GM10248 (cell line): ENCODE measurements at regions of chr7 and their contacts with region 1.

Region 1: DNA sequence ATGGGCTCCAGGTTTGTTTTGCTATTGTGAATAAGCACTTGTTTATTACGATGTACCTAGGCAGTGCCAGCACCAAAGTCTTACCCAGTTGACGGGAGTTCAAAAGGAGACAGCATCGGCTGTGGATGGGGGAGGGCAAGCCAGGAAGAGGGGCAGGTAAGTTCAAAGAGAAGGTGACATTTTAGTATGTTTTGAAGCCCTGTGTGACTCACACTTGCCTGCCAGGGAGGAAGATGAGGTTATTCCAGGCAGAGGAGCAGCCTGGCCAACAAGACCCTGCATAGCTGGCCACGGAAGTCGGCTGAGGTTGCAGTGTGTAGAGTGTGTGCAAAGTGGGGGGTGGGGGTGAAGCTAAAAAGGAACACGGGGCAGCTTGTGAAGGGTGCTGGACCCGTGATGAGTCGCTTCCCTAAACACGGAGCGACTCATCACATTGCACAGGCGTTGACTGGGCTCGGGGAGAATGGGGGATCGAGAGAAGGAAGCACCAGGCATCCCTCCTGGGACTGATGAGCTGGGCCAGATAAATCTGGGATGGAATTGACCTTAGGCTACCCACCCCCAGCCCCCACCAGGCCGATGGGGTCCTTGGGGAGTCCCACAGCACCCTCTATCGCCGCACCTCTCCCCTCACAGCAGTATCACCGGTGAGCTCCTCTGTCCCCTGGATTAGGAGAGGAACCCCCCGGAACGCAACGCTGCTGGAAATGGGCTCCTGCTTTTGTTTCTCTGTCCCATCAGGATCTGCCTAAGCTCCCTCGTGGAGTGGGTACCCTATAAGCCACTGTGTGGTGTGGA is 97.9 kb upstream of the IKZF1 start:
- DNase-seq: no peak
- CTCF ChIP-seq: no peak

Region 2: GRCh38 chr7:50190776-50191175 is 15.9 kb before region 1 on chr7:
- CTCF ChIA-PET with region 1: interaction called, 40 read pairs
- POLR2A ChIA-PET with region 1: no interaction called
- DNase-seq: no peak
- CTCF ChIP-seq: no peak

Region 3: GRCh38 chr7:50266635-50267386 is 60.2 kb after region 1 on chr7:
- CTCF ChIA-PET with region 1: interaction called, 12 read pairs
- POLR2A ChIA-PET with region 1: no interaction called
- DNase-seq: peak; percentile 59
- CTCF ChIP-seq: no peak

Region 4: DNA sequence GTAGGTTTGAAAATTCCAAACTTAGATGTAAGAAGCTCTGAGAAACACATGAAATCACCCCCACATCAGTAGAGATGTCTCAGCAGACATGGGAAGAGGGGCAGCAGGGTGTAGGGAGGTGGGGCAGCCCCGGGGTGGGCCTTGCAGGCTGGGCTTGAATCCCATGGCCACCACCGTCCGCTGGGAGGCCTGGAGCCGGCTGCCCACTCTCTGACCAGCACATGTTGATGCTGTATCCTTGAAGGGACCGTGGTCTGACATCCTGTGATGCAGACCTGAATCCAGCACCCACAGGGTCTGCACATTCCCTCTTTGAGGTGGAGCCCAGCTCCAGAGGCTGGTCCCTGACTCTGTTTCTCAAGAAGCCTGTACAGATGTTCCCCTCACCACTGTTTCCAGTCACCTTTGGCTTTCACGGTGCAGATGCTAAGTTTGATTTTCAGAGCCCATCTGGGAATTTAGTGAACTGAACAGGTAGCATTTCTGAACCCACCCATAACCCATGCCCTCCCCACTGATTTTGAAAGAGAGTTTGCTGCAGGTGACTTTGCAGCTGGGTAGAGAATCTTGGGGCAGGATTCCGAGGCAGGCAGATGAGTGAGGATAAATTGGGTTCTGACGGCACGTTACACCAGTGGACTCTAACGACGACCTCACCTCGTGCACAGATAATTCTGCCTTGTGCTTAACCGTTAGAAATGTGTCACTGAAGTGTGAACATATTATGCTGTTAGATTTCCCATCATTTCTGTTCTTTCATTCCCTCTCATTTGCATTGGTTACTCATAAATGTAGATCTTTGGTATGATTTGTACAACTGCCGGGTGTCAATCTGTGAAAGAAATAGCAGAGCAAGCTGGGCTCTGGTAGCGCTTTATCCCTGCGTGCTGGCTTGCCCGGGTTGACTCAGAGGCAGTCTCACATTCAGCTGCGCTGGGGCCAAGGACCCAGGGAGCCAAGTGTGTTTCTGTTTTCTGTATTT is 143.6 kb after region 1 on chr7:
- CTCF ChIA-PET with region 1: interaction called, 11 read pairs
- POLR2A ChIA-PET with region 1: no interaction called
- DNase-seq: peak; percentile 57
- CTCF ChIP-seq: no peak

Region 5: GRCh38 chr7:50418086-50418515 is 211.4 kb after region 1 on chr7:
- CTCF ChIA-PET with region 1: interaction called, 99 read pairs
- POLR2A ChIA-PET with region 1: no interaction called
- DNase-seq: peak; percentile 75
- CTCF ChIP-seq: peak; percentile 97

Region 6: GRCh38 chr7:50661345-50662040 is 454.8 kb after region 1 on chr7:
- CTCF ChIA-PET with region 1: no interaction called
- POLR2A ChIA-PET with region 1: no interaction called
- DNase-seq: no peak
- CTCF ChIP-seq: no peak